ENCODE measurements at regions of chr1 and their contacts with region 1.

Region 1: GRCh38 chr1:235067263-235068172 is 61.1 kb downstream of the TOMM20 start:
- DNase-seq: peak in 1 of 2 donors; percentile 98
- H3K4me3 ChIP-seq: no peak overlapping the region
- H3K27ac ChIP-seq: peak overlapping the region; percentile 69
- H3K4me1 ChIP-seq: peaks cover 45% of the 10 kb centered on the region
- H3K27me3 ChIP-seq: no peaks in the 10 kb centered on the region
- CTCF ChIP-seq: no peak
- POLR2A ChIP-seq: no peak

Region 2: GRCh38 chr1:234925440-234926263 is 141.9 kb before region 1 on chr1:
- intact Hi-C with region 1: loop called (anchors 5 kb)
- DNase-seq: peak in 1 of 2 donors; percentile 83
- H3K4me3 ChIP-seq: no peak overlapping the region
- H3K27ac ChIP-seq: peak overlapping the region; percentile 88
- H3K4me1 ChIP-seq: peaks cover 42% of the 10 kb centered on the region
- H3K27me3 ChIP-seq: no peaks in the 10 kb centered on the region
- CTCF ChIP-seq: no peak
- POLR2A ChIP-seq: no peak

Measured in vagina (tissue), 2 donors.